Activated CD4-positive, alpha-beta T cell treated with anti-CD3 and anti-CD28 coated beads, Interleukin-2, amount 10 ng/mL, durations not matched to agents 7 days and 5 days (primary cell): ENCODE measurements at regions of chr11 and their contacts with region 1.

Region 1: DNA sequence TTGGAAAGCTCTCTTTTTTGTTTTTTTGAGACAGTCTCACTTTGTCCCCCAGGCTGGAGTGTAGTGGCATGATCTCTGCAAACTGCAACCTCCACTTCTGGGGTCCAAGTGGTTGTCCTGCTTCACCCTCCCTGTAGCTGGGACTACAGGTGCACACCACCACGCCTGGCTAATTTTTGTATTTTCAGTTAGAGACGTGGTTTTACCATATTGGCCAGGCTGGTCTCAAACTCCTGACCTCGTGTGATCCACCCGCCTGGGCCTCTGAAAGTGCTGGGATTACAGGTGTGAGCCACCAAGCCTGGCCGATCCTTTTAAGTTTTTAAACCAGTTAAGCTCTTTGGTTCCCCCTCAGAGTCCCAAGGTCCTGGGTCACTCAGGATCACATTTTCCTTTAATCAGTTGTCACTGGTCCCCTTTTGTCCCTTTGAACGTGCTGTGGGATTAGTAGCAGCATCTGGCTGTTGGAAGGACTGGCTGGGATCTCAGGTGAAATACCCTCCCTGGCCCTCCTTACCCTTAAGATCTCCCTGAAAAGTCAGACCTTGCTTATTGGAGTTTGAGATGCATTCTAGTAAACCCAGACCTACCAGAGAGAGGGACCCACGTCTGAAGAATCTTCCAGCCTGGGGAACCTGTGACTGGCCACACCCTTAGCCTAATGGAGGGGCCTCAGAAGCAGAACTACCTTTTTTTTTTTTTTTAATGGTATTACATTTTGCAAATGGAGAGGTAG is 8.1 kb downstream of the MALAT1 start:
- DNase-seq: peak; percentile 34
- H3K4me3 Mint-ChIP-seq: no peak overlapping the region
- H3K27ac Mint-ChIP-seq: peak overlapping the region; percentile 78
- H3K4me1 Mint-ChIP-seq: peaks cover 54% of the 10 kb centered on the region
- H3K27me3 Mint-ChIP-seq: no peaks in the 10 kb centered on the region

Region 2: GRCh38 chr11:65083834-65084597 is 422.9 kb before region 1 on chr11 and contains the starts of genes CDCA5 and ZFPL1:
- CTCF ChIA-PET with region 1: no interaction called
- POLR2A ChIA-PET with region 1: no interaction called
- DNase-seq: peak; percentile 97
- H3K4me3 Mint-ChIP-seq: peak within 1 kb of the TSS; percentile 98
- H3K27ac Mint-ChIP-seq: peak within 1 kb of the TSS; percentile 99
- H3K4me1 Mint-ChIP-seq: peaks cover 51% of the 10 kb centered on the region
- H3K27me3 Mint-ChIP-seq: no peaks in the 10 kb centered on the region
- total RNA-seq, gene CDCA5: 105 to 109 TPM
- total RNA-seq, gene ZFPL1: 27.2 to 29.8 TPM

Region 3: GRCh38 chr11:65341856-65342255 is 165.1 kb before region 1 on chr11:
- CTCF ChIA-PET with region 1: no interaction called
- POLR2A ChIA-PET with region 1: no interaction called
- DNase-seq: no peak
- H3K4me3 Mint-ChIP-seq: no peak overlapping the region
- H3K27ac Mint-ChIP-seq: no peak overlapping the region
- H3K4me1 Mint-ChIP-seq: peaks cover 17% of the 10 kb centered on the region
- H3K27me3 Mint-ChIP-seq: no peaks in the 10 kb centered on the region

Region 4: DNA sequence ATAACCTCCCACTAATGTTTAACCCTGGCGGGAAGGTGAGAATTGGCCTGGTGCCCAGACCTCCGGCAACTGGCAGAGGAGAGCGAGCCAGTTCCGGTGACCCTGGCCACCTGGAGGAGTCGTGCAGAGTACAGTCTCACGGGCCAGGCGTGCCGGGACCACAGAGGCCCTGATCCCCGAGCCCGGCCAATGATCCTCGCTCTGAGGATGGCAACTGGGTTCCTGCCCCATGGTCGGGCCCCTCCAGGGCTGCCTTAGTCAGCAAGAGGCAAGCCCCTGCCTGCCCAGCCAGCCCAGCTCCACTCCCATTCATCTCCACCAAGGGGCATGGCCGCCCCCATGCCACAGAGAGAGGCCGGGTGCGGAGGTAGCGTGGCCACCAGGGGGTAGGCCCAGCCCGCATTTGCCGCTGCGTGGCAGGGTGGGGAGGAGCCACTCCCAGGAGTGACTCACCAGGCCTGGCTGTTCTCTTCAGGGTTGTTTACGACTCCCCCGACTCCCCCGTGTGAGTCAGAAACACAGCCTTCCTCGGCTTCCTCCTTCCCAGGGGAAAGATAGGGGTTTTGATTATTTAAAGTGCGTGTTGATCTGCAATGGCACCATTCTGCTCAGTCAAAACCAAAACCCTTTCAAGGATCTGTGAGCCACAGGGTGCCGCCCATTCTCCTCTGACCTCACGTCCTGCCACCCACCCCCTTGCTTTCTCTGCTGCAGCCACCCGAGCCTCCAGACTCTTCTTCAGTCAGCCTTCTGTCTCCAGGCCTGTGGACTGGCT is 124.7 kb before region 1 on chr11 and contains the start of gene SLC25A45:
- CTCF ChIA-PET with region 1: interaction called, 15 read pairs
- POLR2A ChIA-PET with region 1: interaction called, 3 read pairs
- DNase-seq: peak; percentile 90
- H3K4me3 Mint-ChIP-seq: peak within 1 kb of the TSS; percentile 79
- H3K27ac Mint-ChIP-seq: peak within 1 kb of the TSS; percentile 98
- H3K4me1 Mint-ChIP-seq: peaks cover 56% of the 10 kb centered on the region
- H3K27me3 Mint-ChIP-seq: no peaks in the 10 kb centered on the region
- total RNA-seq, gene SLC25A45: 40.9 TPM

Region 5: GRCh38 chr11:65532388-65533064 is 25.6 kb after region 1 on chr11:
- CTCF ChIA-PET with region 1: no interaction called
- POLR2A ChIA-PET with region 1: no interaction called
- DNase-seq: no peak
- H3K4me3 Mint-ChIP-seq: no peak overlapping the region
- H3K27ac Mint-ChIP-seq: peak overlapping the region; percentile 5
- H3K4me1 Mint-ChIP-seq: peaks cover 24% of the 10 kb centered on the region
- H3K27me3 Mint-ChIP-seq: no peaks in the 10 kb centered on the region

Region 6: GRCh38 chr11:65547446-65548125 is 40.6 kb after region 1 on chr11:
- CTCF ChIA-PET with region 1: no interaction called
- POLR2A ChIA-PET with region 1: no interaction called
- DNase-seq: no peak
- H3K4me3 Mint-ChIP-seq: peak overlapping the region; percentile 70
- H3K27ac Mint-ChIP-seq: peak overlapping the region; percentile 55
- H3K4me1 Mint-ChIP-seq: peaks cover 56% of the 10 kb centered on the region
- H3K27me3 Mint-ChIP-seq: no peaks in the 10 kb centered on the region